Activated CD4-positive, alpha-beta T cell treated with anti-CD3 and anti-CD28 coated beads for 36 hours (primary cell): ENCODE measurements at regions of chr6 and their contacts with region 1.

Region 1: GRCh38 chr6:119742188-119742803 is 392.7 kb upstream of the MAN1A1 start:
- DNase-seq: peak; percentile 79
- ATAC-seq: peak; percentile 74
- H3K4me3 Mint-ChIP-seq: no peak overlapping the region
- H3K27ac Mint-ChIP-seq: no peak overlapping the region
- H3K4me1 Mint-ChIP-seq: no peaks in the 10 kb centered on the region
- H3K27me3 Mint-ChIP-seq: peaks cover 6% of the 10 kb centered on the region

Region 2: GRCh38 chr6:119147101-119148053 is 594.9 kb before region 1 on chr6:
- CTCF ChIA-PET with region 1: no interaction called
- POLR2A ChIA-PET with region 1: no interaction called
- intact Hi-C with region 1: loop called in 1 of 2 experiments (anchors 5 kb)
- DNase-seq: peak; percentile 78
- ATAC-seq: peak; percentile 87
- H3K4me3 Mint-ChIP-seq: no peak overlapping the region
- H3K27ac Mint-ChIP-seq: peak overlapping the region; percentile 27
- H3K4me1 Mint-ChIP-seq: peaks cover 45% of the 10 kb centered on the region
- H3K27me3 Mint-ChIP-seq: peaks cover 5% of the 10 kb centered on the region

Region 3: DNA sequence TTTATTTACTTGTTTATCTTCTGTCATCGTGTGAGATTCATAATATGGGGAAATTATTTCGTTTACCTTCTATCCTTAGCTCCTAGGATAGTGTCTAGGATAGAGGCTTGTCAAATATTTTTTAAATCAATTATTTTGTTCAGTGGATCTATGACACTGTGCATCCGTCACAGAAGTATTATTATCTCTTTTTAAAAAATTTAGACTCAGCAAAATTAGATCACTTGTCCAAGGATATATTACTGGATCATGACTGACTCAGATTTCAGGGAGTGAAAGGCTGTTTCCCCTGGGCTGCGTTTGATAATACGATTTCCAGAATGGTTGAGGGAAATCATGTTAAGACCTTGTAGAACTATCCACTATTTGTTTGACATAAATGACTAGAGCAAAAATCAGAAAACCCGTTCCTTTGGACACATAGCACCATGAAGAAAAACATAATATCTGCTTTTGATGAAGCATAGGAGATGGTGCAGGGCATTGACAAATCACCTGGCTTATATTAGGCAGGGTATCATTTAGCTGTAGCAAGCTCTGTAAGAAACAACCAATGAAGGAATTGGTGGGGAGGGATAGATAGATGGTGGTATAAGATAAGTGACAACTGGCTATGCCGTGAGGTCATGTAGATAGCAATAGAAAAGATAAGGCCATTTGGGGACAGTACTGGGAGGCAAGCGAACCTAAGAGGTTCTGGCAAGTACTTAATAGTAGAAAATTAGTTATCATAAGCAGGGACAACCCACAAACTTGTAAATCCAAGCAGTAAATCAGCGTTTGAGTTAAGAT is 72.5 kb after region 1 on chr6:
- CTCF ChIA-PET with region 1: no interaction called
- POLR2A ChIA-PET with region 1: no interaction called
- intact Hi-C with region 1: loop called in 1 of 2 experiments (anchors 2 kb)
- DNase-seq: no peak
- ATAC-seq: no peak
- H3K4me3 Mint-ChIP-seq: no peak overlapping the region
- H3K27ac Mint-ChIP-seq: no peak overlapping the region
- H3K4me1 Mint-ChIP-seq: no peaks in the 10 kb centered on the region
- H3K27me3 Mint-ChIP-seq: no peaks in the 10 kb centered on the region

Region 4: DNA sequence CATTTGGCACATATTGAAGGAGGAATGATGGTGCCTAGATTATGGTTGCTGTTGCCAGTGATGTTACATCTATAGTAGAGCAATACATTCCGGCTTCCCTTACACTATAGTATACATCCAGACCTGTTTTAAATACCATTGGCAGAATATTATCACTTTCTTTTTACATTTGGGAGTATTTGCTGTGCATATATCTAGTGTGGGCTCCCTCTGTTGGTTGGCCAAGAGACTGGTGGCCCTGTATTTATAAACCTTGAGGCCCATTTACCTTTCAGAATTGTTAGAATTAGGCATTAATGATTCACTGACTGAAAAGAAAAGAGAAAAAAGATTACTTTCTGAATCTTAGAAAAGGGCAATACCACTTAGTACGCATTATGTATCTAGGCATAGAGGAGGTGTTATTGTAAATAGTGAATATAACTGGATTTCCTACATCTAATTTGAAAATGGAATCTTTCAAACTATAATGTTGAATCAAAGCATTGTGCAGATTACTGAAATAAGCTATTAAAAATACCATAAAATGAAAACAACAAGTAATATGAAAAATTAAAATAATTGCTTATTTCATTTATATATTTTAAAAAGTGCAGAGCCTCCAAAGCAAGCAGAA is 236.1 kb after region 1 on chr6:
- CTCF ChIA-PET with region 1: no interaction called
- POLR2A ChIA-PET with region 1: no interaction called
- intact Hi-C with region 1: loop called (anchors 1 to 5 kb)
- DNase-seq: peak; percentile 11
- ATAC-seq: no peak
- H3K4me3 Mint-ChIP-seq: no peak overlapping the region
- H3K27ac Mint-ChIP-seq: no peak overlapping the region
- H3K4me1 Mint-ChIP-seq: no peaks in the 10 kb centered on the region
- H3K27me3 Mint-ChIP-seq: no peaks in the 10 kb centered on the region

Region 5: GRCh38 chr6:120056085-120056484 is 313.8 kb after region 1 on chr6:
- CTCF ChIA-PET with region 1: no interaction called
- POLR2A ChIA-PET with region 1: no interaction called
- intact Hi-C with region 1: loop called in 1 of 2 experiments (anchors 5 kb)
- DNase-seq: peak; percentile 18
- ATAC-seq: no peak
- H3K4me3 Mint-ChIP-seq: no peak overlapping the region
- H3K27ac Mint-ChIP-seq: no peak overlapping the region
- H3K4me1 Mint-ChIP-seq: no peaks in the 10 kb centered on the region
- H3K27me3 Mint-ChIP-seq: no peaks in the 10 kb centered on the region

Region 6: DNA sequence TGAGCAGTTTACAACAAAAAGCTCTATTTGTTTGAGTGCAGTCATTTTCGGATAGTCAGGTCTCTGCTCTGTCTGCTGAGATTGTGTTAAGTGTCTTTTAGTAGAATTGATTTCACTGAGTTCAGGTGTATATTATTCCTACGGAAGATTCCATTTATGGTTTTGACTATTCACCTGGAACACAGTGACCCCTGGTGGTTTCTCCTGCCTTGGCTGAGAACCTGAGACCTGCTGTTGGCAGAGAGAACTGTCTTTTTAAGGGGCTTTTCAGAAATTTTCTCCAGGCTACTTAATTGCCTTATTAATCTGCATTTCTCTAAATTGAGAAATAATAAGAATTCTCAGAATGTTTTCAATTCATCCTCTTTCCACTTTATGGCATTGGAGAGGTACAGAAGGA is 1084.0 kb after region 1 on chr6:
- CTCF ChIA-PET with region 1: no interaction called
- POLR2A ChIA-PET with region 1: no interaction called
- intact Hi-C with region 1: loop called in 1 of 2 experiments (anchors 2 kb)
- DNase-seq: peak; percentile 36
- ATAC-seq: no peak
- H3K4me3 Mint-ChIP-seq: no peak overlapping the region
- H3K27ac Mint-ChIP-seq: no peak overlapping the region
- H3K4me1 Mint-ChIP-seq: no peaks in the 10 kb centered on the region
- H3K27me3 Mint-ChIP-seq: no peaks in the 10 kb centered on the region

Region 7: DNA sequence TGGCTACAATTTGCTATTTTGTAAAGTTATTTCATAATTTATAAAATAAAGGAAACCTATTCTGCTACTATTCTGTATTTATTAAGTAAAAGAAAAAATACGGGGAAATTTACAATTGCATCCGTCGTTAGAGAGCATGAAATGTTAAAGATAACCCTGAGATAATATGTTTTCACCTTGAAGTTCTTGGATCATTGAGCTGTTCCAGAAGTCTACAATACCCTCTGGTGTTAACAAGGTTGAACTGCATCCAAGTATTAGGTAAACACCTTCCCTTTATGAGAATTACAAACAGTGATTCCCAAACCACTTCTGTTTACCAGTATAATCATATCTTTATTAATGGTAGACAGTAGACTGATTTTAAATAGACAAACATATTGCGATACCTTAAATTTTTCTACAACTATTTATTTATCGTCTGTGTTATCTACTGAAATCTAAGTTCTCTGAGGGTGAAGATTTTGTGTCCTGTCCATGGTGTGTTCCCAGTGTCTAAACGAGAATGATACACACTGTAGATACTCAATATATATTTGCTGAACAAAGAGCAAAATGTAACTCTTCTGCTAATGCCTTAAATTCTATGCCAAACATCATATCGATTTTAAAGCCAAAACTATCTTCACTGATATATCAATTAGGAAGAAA is 1563.8 kb after region 1 on chr6:
- CTCF ChIA-PET with region 1: no interaction called
- POLR2A ChIA-PET with region 1: no interaction called
- intact Hi-C with region 1: loop called in 1 of 2 experiments (anchors 5 kb)
- DNase-seq: no peak
- ATAC-seq: no peak
- H3K4me3 Mint-ChIP-seq: no peak overlapping the region
- H3K27ac Mint-ChIP-seq: no peak overlapping the region
- H3K4me1 Mint-ChIP-seq: peaks cover 4% of the 10 kb centered on the region
- H3K27me3 Mint-ChIP-seq: no peaks in the 10 kb centered on the region